HEK293 (cell line): ENCODE measurements at regions of chr16 and their contacts with region 1.

Region 1: DNA sequence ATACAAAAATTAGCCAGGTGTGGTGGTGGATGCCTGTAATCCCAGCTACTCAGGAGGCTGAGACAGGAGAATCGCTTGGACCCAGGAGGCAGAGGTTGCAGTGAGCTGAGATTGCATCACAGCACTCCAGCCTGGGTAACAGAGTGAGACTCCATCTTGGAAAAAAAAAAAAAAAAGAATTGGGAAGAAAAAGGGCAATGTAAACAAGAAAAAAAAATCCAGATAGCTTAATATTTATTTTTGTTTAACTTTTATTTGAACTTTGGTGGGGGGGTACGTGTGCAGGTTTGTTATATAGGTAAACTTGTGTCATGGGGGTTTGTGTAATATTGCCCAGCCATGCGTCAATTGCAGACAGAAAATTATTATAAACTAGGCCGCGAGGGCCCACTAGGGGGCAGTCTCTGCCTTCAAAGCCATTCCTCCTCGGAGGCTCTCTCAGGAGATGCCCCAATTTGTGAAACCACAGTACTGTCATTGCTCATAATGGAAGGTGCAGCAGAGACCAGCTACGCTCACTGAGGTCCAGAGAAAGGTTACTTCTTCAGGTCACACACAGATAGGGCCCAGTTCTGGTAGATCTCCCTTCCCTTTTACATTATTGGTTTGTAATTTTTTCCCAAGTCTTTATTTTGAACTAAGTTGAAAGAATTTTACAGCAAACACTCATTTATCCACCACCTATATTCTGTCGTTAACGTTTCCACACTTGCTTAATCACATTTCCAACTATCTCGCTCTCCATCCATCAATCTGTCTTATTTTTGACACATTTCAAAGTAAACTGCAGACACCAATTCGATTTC is 206.2 kb downstream of the PRKCB start:
- H3K4me3 ChIP-seq: no peak overlapping the region
- H3K27ac ChIP-seq: no peak overlapping the region
- H3K4me1 ChIP-seq: no peaks in the 10 kb centered on the region
- CTCF ChIP-seq: peak; percentile 68

Region 2: GRCh38 chr16:23924128-23924527 is 117.9 kb before region 1 on chr16:
- CTCF ChIA-PET with region 1: no interaction called
- POLR2A ChIA-PET with region 1: no interaction called
- H3K4me3 ChIP-seq: no peak overlapping the region
- H3K27ac ChIP-seq: no peak overlapping the region
- H3K4me1 ChIP-seq: no peaks in the 10 kb centered on the region
- CTCF ChIP-seq: no peak

Region 3: DNA sequence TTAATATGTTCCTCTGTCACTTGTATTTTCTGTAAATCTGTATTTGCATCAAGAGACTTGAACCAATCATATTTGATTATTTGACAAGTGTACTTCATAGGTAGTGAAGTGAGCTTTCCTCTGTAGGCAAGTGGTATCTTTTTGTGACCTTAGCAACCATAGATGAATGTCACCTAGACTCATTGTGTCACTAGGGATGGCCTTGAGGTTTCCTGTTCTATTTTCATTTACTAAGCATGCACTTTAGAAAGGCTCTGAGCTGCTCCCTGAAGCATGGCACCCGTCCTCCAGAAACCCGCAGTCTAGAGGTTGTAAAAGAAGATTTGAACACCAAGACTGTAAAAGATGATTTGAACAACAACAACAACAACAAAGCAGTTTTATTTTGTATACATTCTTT is 54.6 kb before region 1 on chr16:
- CTCF ChIA-PET with region 1: no interaction called
- POLR2A ChIA-PET with region 1: no interaction called
- H3K4me3 ChIP-seq: no peak overlapping the region
- H3K27ac ChIP-seq: no peak overlapping the region
- H3K4me1 ChIP-seq: no peaks in the 10 kb centered on the region
- CTCF ChIP-seq: no peak

Region 4: DNA sequence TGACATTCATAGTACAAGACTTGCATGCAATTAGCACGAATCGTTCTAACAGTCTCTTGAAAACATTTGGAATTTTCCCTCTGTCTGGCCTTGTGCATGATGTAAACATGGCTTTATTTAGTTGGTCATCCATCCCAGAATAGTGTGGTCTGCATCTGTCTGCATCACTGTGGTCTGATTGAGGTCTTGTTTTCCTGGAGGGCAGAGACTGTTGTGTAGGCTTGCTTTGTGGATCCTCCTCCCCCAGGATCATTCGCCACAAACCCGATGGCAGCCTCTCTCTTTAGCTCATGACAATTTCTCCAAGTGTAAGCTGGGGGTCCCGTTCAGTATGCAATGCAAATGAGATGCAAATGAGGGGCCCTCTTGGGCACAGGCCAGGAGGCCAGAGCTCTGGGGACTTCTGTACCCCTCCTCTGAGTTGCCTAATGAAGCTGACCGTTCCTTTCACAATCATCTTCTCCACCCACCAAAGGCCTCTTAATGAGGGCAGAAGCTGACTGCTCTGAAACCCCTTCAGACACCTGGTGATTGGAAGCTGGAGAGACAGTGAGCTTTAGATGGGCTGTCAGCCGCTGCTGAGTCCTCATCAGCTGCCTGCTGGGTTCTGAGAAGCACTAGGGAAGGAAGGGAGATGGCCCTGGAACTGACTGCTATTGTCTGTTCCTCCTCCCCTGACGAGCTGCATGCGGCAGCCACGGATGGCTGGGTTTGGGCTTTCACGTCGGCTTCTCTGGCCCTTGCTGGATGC is 12.9 kb after region 1 on chr16:
- CTCF ChIA-PET with region 1: interaction called, 12 read pairs
- POLR2A ChIA-PET with region 1: no interaction called
- H3K4me3 ChIP-seq: no peak overlapping the region
- H3K27ac ChIP-seq: no peak overlapping the region
- H3K4me1 ChIP-seq: no peaks in the 10 kb centered on the region
- CTCF ChIP-seq: no peak

Region 5: GRCh38 chr16:24253192-24253591 is 211.2 kb after region 1 on chr16:
- CTCF ChIA-PET with region 1: interaction called, 30 read pairs
- POLR2A ChIA-PET with region 1: no interaction called
- H3K4me3 ChIP-seq: no peak overlapping the region
- H3K27ac ChIP-seq: no peak overlapping the region
- H3K4me1 ChIP-seq: no peaks in the 10 kb centered on the region; the same call in 1 of the 2 replicates
- CTCF ChIP-seq: no peak

Region 6: GRCh38 chr16:24499193-24499814 is 457.3 kb after region 1 on chr16:
- CTCF ChIA-PET with region 1: interaction called, 195 read pairs
- POLR2A ChIA-PET with region 1: interaction called, 5 read pairs
- H3K4me3 ChIP-seq: no peak overlapping the region
- H3K27ac ChIP-seq: no peak overlapping the region
- H3K4me1 ChIP-seq: no peaks in the 10 kb centered on the region
- CTCF ChIP-seq: peak; percentile 76